Naive thymus-derived CD4-positive, alpha-beta T cell (primary cell): ENCODE measurements at regions of chr17 and their contacts with region 1.

Region 1: GRCh38 chr17:82320956-82321927 is 3.8 kb upstream of the CD7 start:
- DNase-seq: peak; percentile 70 to 95 (median 80)
- ATAC-seq: peak; percentile 69
- H3K4me3 ChIP-seq: peak overlapping the region; percentile 46
- H3K4me3 Mint-ChIP-seq: peak overlapping the region; percentile 58 to 87 (median 82)
- H3K27ac ChIP-seq: peak overlapping the region; percentile 77
- H3K27ac Mint-ChIP-seq: peak overlapping the region; percentile 75 to 97 (median 93)
- H3K4me1 ChIP-seq: peaks cover 13 to 20% of the 10 kb centered on the region in 2 donors
- H3K4me1 Mint-ChIP-seq: peaks cover 0 to 31% (median 16%) of the 10 kb centered on the region in 7 donors
- H3K27me3 ChIP-seq: no peaks in the 10 kb centered on the region
- H3K27me3 Mint-ChIP-seq: no peaks in the 10 kb centered on the region

Region 2: DNA sequence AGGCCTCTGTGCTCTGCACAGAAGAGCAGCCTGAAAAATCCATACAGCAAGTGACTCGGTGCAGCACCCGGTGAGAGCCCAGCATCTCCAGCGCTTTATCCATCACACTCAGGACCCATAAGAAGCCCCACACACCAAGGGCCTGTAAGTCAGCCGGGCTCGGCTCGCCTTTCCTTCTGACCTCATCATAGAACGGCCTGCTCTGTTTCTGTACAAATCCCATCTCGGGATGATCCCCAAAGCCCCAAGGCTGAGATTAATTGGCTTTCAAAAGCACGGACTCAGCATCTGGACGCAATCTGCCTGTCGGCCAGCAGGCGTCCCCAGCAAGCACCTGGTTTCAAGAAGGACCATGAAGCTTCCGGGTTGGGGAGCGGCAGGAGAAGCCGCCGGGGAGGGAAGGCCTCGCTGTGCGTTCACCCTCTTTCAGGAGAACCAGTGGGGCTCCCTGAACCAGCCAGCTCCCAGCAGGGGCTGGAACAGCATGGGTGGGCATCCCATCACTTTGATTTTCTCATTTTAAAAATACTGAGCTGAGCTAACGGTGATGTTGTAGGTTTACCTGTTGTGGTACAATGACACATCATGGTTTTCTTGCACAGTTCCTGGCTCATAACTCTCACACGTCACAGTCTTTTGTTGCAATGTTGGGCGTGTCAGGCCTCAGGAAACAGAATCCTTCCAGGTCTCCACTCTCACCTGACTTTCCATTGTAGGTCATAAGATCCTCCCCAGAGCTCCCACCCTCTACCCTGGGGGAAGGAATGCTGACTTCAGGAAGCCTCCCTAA is 115.3 kb before region 1 on chr17:
- CTCF ChIA-PET with region 1: interaction called, 3 read pairs
- POLR2A ChIA-PET with region 1: interaction called, 10 read pairs
- intact Hi-C with region 1: loop called in 1 of 2 experiments (anchors 1 kb)
- DNase-seq: peak; percentile 67 to 87 (median 82)
- ATAC-seq: peak; percentile 88
- H3K4me3 ChIP-seq: no peak overlapping the region
- H3K4me3 Mint-ChIP-seq: peak overlapping the region in 9 of 10 donors; percentile 45 to 71 (median 58)
- H3K27ac ChIP-seq: peak overlapping the region; percentile 64
- H3K27ac Mint-ChIP-seq: peak overlapping the region; percentile 87 to 98 (median 95)
- H3K4me1 ChIP-seq: peaks cover 14 to 22% of the 10 kb centered on the region in 2 donors
- H3K4me1 Mint-ChIP-seq: peaks cover 24 to 61% (median 43%) of the 10 kb centered on the region in 7 donors
- H3K27me3 ChIP-seq: no peaks in the 10 kb centered on the region
- H3K27me3 Mint-ChIP-seq: no peaks in the 10 kb centered on the region

Region 3: GRCh38 chr17:82236142-82236981 is 84.9 kb before region 1 on chr17:
- CTCF ChIA-PET with region 1: interaction called, 10 read pairs
- POLR2A ChIA-PET with region 1: interaction called, 11 read pairs
- intact Hi-C with region 1: loop called (anchors 1 kb)
- DNase-seq: peak; percentile 58 to 77 (median 71)
- ATAC-seq: peak; percentile 66
- H3K4me3 ChIP-seq: no peak overlapping the region
- H3K4me3 Mint-ChIP-seq: peak overlapping the region in 1 of 10 donors; percentile 17
- H3K27ac ChIP-seq: peak overlapping the region; percentile 46
- H3K27ac Mint-ChIP-seq: peak overlapping the region in 5 of 9 donors; percentile 23 to 82 (median 51)
- H3K4me1 ChIP-seq: peaks cover 10 to 47% of the 10 kb centered on the region in 2 donors
- H3K4me1 Mint-ChIP-seq: peaks cover 5 to 47% (median 33%) of the 10 kb centered on the region in 7 donors
- H3K27me3 ChIP-seq: no peaks in the 10 kb centered on the region
- H3K27me3 Mint-ChIP-seq: no peaks in the 10 kb centered on the region

Region 4: DNA sequence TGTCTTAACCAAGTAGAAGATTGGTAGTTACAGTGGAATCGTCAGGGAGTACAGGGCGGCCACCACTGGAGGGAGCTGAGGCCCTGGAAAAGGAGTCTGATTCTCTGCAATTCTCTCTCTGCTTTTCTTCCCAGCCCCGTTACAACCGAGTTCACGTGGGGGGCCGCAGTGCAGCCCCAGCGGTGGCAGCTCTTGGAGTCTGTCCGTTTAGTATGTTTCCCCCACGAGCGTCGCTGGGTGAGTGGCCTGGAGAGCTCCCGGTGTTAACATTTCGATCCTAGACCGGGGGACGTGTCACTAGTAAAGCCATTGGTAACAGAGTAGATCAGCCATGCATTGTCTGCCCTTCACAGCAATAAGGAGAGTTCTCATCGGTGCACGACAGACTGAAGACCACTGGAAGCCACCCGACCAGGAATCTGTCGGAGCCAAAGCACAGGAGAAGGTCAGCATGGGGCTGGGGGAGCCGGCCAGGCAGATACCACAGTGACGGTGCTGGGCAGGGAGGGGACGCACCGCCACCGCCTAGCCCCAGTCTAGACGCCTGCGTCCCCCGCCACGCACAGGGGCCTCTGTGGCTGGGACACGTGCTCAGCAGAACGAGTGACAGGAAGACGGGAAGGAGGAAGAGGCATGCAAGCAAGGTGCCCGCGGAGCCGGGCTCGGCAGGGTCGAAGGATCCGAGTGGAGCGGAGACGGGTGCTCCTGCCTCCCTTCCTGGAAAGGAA is 76.7 kb before region 1 on chr17:
- CTCF ChIA-PET with region 1: no interaction called
- POLR2A ChIA-PET with region 1: interaction called, 11 read pairs
- intact Hi-C with region 1: loop called in 1 of 2 experiments (anchors 2 kb)
- DNase-seq: peak in 2 of 9 donors; percentile 21 to 38
- ATAC-seq: no peak
- H3K4me3 ChIP-seq: no peak overlapping the region
- H3K4me3 Mint-ChIP-seq: no peak overlapping the region
- H3K27ac ChIP-seq: no peak overlapping the region
- H3K27ac Mint-ChIP-seq: peak overlapping the region in 8 of 9 donors; percentile 42 to 84 (median 72)
- H3K4me1 ChIP-seq: peaks cover 3 to 25% of the 10 kb centered on the region in 2 donors
- H3K4me1 Mint-ChIP-seq: peaks cover 14 to 60% (median 36%) of the 10 kb centered on the region in 7 donors
- H3K27me3 ChIP-seq: no peaks in the 10 kb centered on the region
- H3K27me3 Mint-ChIP-seq: no peaks in the 10 kb centered on the region

Region 5: DNA sequence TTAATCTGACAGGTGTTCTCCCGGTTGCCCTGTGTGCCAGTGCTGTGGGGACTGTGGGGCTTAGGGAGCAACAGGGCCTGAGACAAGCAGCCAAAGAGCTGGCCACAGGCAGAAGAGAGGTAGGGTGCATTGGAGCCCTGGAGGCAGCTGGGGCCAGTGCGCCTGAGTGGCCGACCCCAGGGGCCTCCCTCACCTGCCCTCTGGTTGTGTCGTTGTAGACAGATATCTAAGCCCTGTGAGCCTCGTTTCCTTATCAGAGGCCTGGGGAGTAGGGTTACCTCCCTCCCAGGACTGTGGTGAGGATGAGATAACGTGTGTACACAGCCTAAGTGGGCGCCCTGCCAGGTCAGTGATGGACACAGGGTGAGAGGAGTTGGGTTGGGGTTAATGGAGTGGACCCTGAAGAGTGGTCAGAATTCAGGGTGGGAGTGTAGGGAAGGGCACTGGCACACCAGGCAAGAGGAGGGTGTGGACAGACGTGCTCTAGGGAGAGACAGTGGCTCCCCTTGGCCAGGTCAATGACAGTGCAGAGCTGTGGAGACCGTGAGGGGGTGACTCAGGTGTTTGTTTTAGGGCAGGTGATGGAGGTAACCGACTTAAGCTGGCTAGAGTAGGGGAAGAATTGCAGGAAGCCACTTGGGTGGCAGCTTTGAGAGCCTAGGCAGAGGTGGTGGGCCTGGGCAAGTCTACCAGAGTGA is 140.7 kb after region 1 on chr17:
- CTCF ChIA-PET with region 1: no interaction called
- POLR2A ChIA-PET with region 1: no interaction called
- intact Hi-C with region 1: no loop called
- DNase-seq: no peak
- ATAC-seq: no peak
- H3K4me3 ChIP-seq: no peak overlapping the region
- H3K4me3 Mint-ChIP-seq: peak overlapping the region in 2 of 10 donors; percentile 27 to 76
- H3K27ac ChIP-seq: no peak overlapping the region
- H3K27ac Mint-ChIP-seq: peak overlapping the region in 4 of 9 donors; percentile 26 to 77 (median 58)
- H3K4me1 ChIP-seq: peaks cover 18 to 20% of the 10 kb centered on the region in 2 donors
- H3K4me1 Mint-ChIP-seq: peaks cover 25 to 73% (median 35%) of the 10 kb centered on the region in 7 donors
- H3K27me3 ChIP-seq: no peaks in the 10 kb centered on the region
- H3K27me3 Mint-ChIP-seq: no peaks in the 10 kb centered on the region